ENCODE measurements at regions of chr10 and their contacts with region 1.

Region 1: DNA sequence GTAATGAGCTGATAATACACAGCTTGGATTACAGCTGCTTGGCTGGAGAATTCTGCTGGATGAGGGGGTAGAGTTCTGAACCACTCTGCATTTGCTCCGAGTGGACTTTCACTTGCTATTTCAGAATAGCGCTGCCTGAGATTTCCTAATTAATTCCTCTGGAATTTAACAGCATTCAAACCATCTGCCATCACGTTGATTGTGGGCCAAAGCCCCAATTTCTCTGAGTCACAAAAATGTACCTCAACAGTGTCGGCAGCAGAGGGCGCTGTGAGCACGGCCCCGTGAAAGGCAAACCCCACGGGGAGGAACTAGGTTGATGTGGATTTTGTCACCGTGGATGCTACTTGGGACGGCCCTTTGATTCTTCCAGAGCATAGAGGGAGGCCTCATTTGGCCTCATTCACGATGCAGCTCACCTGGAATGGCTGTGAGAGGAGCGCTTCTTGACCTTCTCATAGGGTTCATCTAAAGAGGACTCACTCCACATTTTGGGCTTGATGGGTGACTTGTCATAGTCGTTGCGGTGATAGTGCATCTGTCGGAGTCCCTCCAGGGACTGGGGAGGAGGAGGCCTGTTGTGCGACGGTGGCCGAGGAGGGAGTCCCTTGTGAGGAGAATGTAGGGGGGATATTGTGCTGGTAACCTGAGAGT is 73.3 kb downstream of the PRPF18 start:
- DNase-seq: peak; percentile 66 to 86 (median 69)
- ATAC-seq: peak; percentile 52 to 62 (median 62)
- H3K4me3 ChIP-seq: no peak overlapping the region
- H3K27ac ChIP-seq: peak overlapping the region; percentile 26 to 76 (median 52)
- H3K4me1 ChIP-seq: peaks cover 0 to 28% (median 21%) of the 10 kb centered on the region in 12 donors
- H3K27me3 ChIP-seq: no peaks in the 10 kb centered on the region
- CTCF ChIP-seq: peak in 11 of 12 donors; percentile 81 to 97 (median 92)
- POLR2A ChIP-seq: no peak

Region 2: GRCh38 chr10:13299437-13300287 is 360.4 kb before region 1 on chr10 and contains the start of gene PHYH:
- intact Hi-C with region 1: no loop called
- DNase-seq: peak; percentile 92 to 96 (median 94)
- ATAC-seq: peak; percentile 87 to 95 (median 90)
- H3K4me3 ChIP-seq: peak within 1 kb of the TSS; percentile 59 to 90 (median 78)
- H3K27ac ChIP-seq: peak within 1 kb of the TSS; percentile 96 to 100 (median 100)
- H3K4me1 ChIP-seq: peaks cover 0 to 31% (median 19%) of the 10 kb centered on the region in 12 donors
- H3K27me3 ChIP-seq: no peaks in the 10 kb centered on the region
- CTCF ChIP-seq: peak in 2 of 12 donors; percentile 9 to 10
- POLR2A ChIP-seq: peak; percentile 55 to 96
- total RNA-seq, gene PHYH: 70.9 to 181 (median 157) TPM

Region 3: DNA sequence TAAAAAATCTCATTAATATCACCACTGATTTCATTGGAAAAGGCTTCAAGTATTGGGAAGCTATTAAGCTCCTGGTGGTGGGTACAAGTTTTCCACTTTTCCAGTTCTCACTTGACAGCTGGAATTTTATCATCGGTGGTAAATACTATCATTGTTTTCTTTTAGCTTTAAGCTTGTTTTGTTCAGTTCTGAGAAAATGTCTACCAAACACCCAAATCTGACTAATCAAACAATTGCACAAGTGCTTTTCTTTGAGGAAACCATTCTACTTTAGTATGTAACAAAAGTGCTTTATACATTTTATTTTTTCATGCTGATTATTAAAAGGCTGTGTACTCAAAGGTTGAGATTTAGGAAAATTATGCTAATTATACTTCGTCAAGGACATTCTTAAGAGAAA is 65.4 kb before region 1 on chr10:
- intact Hi-C with region 1: no loop called
- DNase-seq: no peak
- ATAC-seq: no peak
- H3K4me3 ChIP-seq: no peak overlapping the region
- H3K27ac ChIP-seq: no peak overlapping the region
- H3K4me1 ChIP-seq: no peaks in the 10 kb centered on the region
- H3K27me3 ChIP-seq: no peaks in the 10 kb centered on the region
- CTCF ChIP-seq: no peak
- POLR2A ChIP-seq: no peak

Region 4: DNA sequence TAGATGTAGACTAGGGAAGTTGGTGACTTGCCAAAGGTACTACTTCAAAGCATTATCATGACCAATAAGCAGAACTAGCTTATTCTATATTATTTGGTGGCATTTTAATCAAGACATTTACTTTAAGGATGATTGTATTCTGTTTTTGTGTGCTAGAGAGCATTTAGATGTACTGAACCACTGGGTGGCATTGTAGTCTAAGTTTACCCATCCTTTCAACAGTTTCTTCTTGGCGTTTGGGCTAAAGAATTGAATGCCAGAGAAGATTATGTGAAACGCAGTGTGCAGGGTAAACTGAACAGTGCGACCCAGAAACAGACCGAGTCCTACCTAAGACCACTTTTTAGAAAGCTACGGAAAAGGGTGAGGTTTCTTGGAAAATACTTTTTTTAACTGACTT is 46.5 kb before region 1 on chr10:
- intact Hi-C with region 1: loop called in 1 of 10 experiments (anchors 10 kb)
- DNase-seq: peak in 1 of 5 donors; percentile 10
- ATAC-seq: peak in 3 of 4 donors; percentile 61 to 63 (median 61)
- H3K4me3 ChIP-seq: no peak overlapping the region
- H3K27ac ChIP-seq: no peak overlapping the region
- H3K4me1 ChIP-seq: peaks cover 0 to 13% (median 0%) of the 10 kb centered on the region in 12 donors
- H3K27me3 ChIP-seq: no peaks in the 10 kb centered on the region
- CTCF ChIP-seq: peak in 11 of 12 donors; percentile 7 to 62 (median 51)
- POLR2A ChIP-seq: no peak

Region 5: DNA sequence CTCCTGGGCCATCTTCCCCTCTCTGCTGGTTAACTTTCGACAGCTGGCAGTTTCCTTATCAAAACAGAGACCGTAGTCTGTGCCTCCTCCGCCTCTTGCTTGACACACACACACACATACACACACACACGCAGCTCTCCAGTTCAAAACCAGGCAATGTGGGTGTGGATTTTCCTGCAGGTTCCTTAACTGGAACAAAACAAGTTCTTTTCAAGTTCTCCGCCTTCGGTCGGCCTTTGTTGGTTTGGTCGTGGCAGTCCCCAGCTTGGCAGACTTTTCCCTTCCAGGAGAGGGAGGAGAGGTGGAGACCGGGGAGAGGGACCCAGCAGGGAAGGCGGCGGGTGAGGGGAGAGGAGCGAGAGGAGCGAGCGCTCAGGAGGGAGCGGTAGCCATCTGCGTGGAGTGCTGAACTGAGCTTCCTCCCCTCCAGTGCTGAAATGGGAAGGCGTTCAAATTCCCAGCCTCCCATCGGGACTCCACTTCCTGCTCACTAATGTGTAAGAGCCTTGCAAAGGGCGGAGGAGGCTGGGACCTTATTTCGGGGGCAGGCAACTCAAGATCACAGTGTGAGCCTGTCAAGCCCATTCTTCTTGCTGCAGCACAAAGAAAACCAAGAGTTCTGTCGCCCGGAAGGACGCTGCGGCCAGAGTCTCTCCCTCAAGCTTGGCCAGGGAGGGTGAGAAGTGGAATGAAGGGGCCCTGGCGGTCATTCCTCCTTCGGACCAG is 47.3 kb after region 1 on chr10:
- intact Hi-C with region 1: loop called in 5 of 10 experiments (anchors 5 to 10 kb)
- DNase-seq: peak; percentile 86 to 93 (median 91)
- ATAC-seq: peak; percentile 81 to 92 (median 92)
- H3K4me3 ChIP-seq: peak overlapping the region; percentile 16 to 78 (median 63)
- H3K27ac ChIP-seq: peak overlapping the region; percentile 60 to 91 (median 82)
- H3K4me1 ChIP-seq: peaks cover 4 to 92% (median 58%) of the 10 kb centered on the region in 12 donors
- H3K27me3 ChIP-seq: no peaks in the 10 kb centered on the region
- CTCF ChIP-seq: peak in 3 of 12 donors; percentile 4 to 18 (median 8)
- POLR2A ChIP-seq: peak in 1 of 2 donors; percentile 31

Region 6: GRCh38 chr10:13712837-13713581 is 53.0 kb after region 1 on chr10:
- intact Hi-C with region 1: loop called in 4 of 10 experiments (anchors 5 to 10 kb)
- DNase-seq: peak; percentile 77 to 91 (median 84)
- ATAC-seq: peak; percentile 39 to 90 (median 82)
- H3K4me3 ChIP-seq: no peak overlapping the region
- H3K27ac ChIP-seq: peak overlapping the region; percentile 12 to 84 (median 42)
- H3K4me1 ChIP-seq: peaks cover 4 to 75% (median 35%) of the 10 kb centered on the region in 12 donors
- H3K27me3 ChIP-seq: no peaks in the 10 kb centered on the region
- CTCF ChIP-seq: no peak
- POLR2A ChIP-seq: no peak

Region 7: GRCh38 chr10:13776861-13777311 is 116.9 kb after region 1 on chr10:
- intact Hi-C with region 1: loop called (anchors 1 to 2 kb)
- DNase-seq: no peak
- ATAC-seq: no peak
- H3K4me3 ChIP-seq: no peak overlapping the region
- H3K27ac ChIP-seq: no peak overlapping the region
- H3K4me1 ChIP-seq: peaks cover 0 to 29% (median 11%) of the 10 kb centered on the region in 12 donors
- H3K27me3 ChIP-seq: no peaks in the 10 kb centered on the region
- CTCF ChIP-seq: no peak
- POLR2A ChIP-seq: no peak

Region 8: DNA sequence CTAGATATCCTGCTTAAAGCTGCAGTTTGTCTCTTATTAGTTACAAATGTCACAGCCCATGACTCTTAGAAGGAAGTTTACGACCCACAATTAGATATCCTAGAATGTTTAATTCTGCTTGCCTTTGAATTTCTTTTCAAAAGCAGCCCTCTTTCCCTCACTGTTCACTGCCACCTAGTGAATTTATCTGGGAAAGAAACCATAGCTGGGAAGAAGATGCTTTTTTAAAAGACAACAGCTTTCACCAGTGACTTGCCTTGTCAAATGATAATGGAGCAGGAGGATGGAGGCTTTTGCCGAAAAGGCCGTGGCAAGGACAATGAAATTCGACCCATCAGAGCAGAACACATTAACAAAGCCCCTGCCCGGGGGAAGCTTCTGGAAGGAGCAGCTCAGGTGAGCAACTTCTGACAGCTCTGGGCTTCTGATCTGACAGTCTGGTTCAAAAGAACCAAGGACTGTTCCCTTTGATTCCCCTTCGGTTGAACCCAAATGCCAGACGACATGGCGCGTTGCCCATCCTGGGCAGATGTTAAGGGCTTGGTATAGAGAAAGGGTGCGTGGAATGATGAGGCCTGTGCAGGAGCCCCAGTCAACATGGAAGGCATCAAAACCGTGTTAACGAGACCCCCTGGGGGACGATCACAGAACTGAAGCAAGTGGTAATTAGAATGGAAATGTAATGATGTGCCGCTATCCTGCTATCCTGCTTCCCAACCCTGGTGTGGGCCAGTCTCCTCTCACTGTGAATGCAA is 433.9 kb after region 1 on chr10:
- intact Hi-C with region 1: loop called in 1 of 10 experiments (anchors 10 kb)
- DNase-seq: no peak
- ATAC-seq: peak in 1 of 4 donors; percentile 53
- H3K4me3 ChIP-seq: no peak overlapping the region
- H3K27ac ChIP-seq: no peak overlapping the region
- H3K4me1 ChIP-seq: peaks cover 0 to 10% (median 4%) of the 10 kb centered on the region in 12 donors
- H3K27me3 ChIP-seq: no peaks in the 10 kb centered on the region
- CTCF ChIP-seq: peak; percentile 36 to 69 (median 55)
- POLR2A ChIP-seq: no peak